ENCODE measurements at regions of chr1 and their contacts with region 1.

Region 1: GRCh38 chr1:85576642-85577418 is 3.7 kb upstream of the CCN1 start:
- DNase-seq: peak; percentile 63
- ATAC-seq: peak; percentile 59
- H3K4me3 ChIP-seq: peak overlapping the region; percentile 55 to 94
- H3K27ac ChIP-seq: peak overlapping the region; percentile 99
- H3K4me1 ChIP-seq: peaks cover 51% of the 10 kb centered on the region
- H3K27me3 ChIP-seq: no peaks in the 10 kb centered on the region
- CTCF ChIP-seq: peak; percentile 99

Region 2: GRCh38 chr1:85284202-85284601 is 292.6 kb before region 1 on chr1:
- CTCF ChIA-PET with region 1: no interaction called
- POLR2A ChIA-PET with region 1: no interaction called
- in situ Hi-C with region 1: no loop called
- intact Hi-C with region 1: no loop called
- DNase-seq: no peak
- ATAC-seq: no peak
- H3K4me3 ChIP-seq: no peak overlapping the region
- H3K27ac ChIP-seq: no peak overlapping the region
- H3K4me1 ChIP-seq: peaks cover 13% of the 10 kb centered on the region
- H3K27me3 ChIP-seq: no peaks in the 10 kb centered on the region
- CTCF ChIP-seq: no peak

Region 3: DNA sequence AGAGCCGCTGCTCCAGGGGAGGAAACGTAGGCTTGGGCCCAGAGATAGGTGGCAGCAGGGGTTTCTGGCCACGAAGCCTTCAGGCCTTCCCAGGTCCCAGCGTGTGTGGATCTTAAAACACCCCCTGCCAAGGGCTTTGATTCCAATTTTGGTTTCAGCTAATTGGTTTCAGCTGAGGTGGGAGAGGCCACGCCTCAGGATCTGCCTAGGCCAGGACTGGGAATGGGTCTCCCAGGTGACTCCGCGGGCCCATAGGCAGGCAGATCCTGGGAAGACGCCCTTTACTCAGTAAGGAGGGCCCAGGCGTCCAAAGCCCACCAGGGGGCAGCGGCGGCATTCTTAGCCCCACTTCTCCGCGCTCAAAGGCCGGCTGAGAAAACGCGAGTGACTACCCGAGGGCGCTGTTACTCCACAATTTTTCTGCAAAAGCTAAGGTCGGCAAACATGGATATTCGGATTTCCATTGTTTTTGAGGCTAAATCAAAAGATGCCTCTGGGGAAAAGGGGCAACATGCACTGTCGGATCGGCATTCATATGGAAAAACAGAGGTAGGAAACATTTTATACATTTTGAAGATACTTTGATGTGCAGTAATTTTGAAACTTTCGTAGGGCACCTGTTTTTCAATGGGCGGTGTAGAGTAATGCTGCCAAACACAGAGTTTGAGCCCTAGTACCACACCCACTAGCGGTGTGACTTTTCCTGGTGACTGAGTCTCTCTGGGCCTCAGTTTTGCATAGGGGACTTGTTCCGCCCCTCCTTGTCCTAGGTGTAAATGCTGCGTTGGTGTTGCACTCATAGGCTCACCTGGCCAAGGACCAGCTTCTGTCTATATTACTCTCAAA is 268.6 kb before region 1 on chr1:
- CTCF ChIA-PET with region 1: interaction called, 4 read pairs
- POLR2A ChIA-PET with region 1: no interaction called
- in situ Hi-C with region 1: no loop called
- intact Hi-C with region 1: loop called (anchors 2 kb)
- DNase-seq: peak; percentile 91
- ATAC-seq: peak; percentile 98
- H3K4me3 ChIP-seq: no peak overlapping the region
- H3K27ac ChIP-seq: peak overlapping the region; percentile 79
- H3K4me1 ChIP-seq: peaks cover 14% of the 10 kb centered on the region
- H3K27me3 ChIP-seq: no peaks in the 10 kb centered on the region
- CTCF ChIP-seq: peak; percentile 100

Region 4: GRCh38 chr1:85464497-85465098 is 112.2 kb before region 1 on chr1:
- CTCF ChIA-PET with region 1: no interaction called
- POLR2A ChIA-PET with region 1: interaction called, 5 read pairs
- in situ Hi-C with region 1: no loop called
- intact Hi-C with region 1: loop called (anchors 1 kb)
- DNase-seq: no peak
- ATAC-seq: peak; percentile 86
- H3K4me3 ChIP-seq: peak overlapping the region; percentile 80 to 82
- H3K27ac ChIP-seq: peak overlapping the region; percentile 94
- H3K4me1 ChIP-seq: peaks cover 48% of the 10 kb centered on the region
- H3K27me3 ChIP-seq: no peaks in the 10 kb centered on the region
- CTCF ChIP-seq: 0 out of 2 replicates have a peak, but pooled peaks have one; percentile 5

Region 5: DNA sequence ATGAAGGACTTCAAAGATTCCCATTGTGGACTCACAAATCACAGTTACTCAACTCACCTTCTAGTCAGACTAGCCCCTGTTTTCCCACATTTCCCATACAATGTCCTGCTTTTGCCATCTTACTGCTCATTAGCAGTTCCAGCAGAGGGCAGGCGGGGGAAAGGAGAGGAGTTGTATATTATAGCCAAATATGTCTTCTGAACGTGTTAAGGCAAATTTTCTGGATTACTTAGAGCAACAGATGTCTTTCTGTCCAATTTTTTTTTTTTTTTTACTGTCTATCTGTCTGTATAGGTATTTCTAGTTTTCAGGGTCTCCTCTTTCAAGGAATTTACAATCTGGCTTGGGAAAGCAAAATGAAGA is 81.9 kb before region 1 on chr1:
- CTCF ChIA-PET with region 1: no interaction called
- POLR2A ChIA-PET with region 1: interaction called, 3 read pairs
- in situ Hi-C with region 1: no loop called
- intact Hi-C with region 1: loop called (anchors 5 kb)
- DNase-seq: no peak
- ATAC-seq: peak; percentile 80
- H3K4me3 ChIP-seq: no peak overlapping the region
- H3K27ac ChIP-seq: peak overlapping the region; percentile 85
- H3K4me1 ChIP-seq: peaks cover 45% of the 10 kb centered on the region
- H3K27me3 ChIP-seq: no peaks in the 10 kb centered on the region
- CTCF ChIP-seq: peak; percentile 93

Region 6: GRCh38 chr1:85628791-85629531 is 52.1 kb after region 1 on chr1:
- CTCF ChIA-PET with region 1: interaction called, 5 read pairs
- POLR2A ChIA-PET with region 1: no interaction called
- in situ Hi-C with region 1: no loop called
- intact Hi-C with region 1: loop called (anchors 2 kb)
- DNase-seq: peak; percentile 95
- ATAC-seq: peak; percentile 97
- H3K4me3 ChIP-seq: peak overlapping the region; percentile 15 to 45
- H3K27ac ChIP-seq: peak overlapping the region; percentile 96
- H3K4me1 ChIP-seq: peaks cover 31% of the 10 kb centered on the region
- H3K27me3 ChIP-seq: no peaks in the 10 kb centered on the region
- CTCF ChIP-seq: no peak

Measured in Panc1 (cell line).